ENCODE measurements at regions of chr17 and their contacts with region 1.

Region 1: GRCh38 chr17:6913608-6914443 is 82.0 kb upstream of the ALOX12 start:
- DNase-seq: peak; percentile 57 to 74
- ATAC-seq: peak; percentile 70 to 82
- H3K4me3 ChIP-seq: peak overlapping the region; percentile 36; the same call in 2 of the 3 replicates
- H3K27ac ChIP-seq: peak overlapping the region; percentile 9 to 50; a peak in 3 of 6 replicates
- H3K4me1 ChIP-seq: peaks cover 5% of the 10 kb centered on the region; the same call in 2 of the 3 replicates
- CTCF ChIP-seq: peak; percentile 84
- EP300 ChIP-seq: no peak
- POLR2A ChIP-seq: no peak
- RAD21 ChIP-seq: peak; percentile 88 to 89

Region 2: GRCh38 chr17:6862822-6863221 is 51.0 kb before region 1 on chr17:
- CTCF ChIA-PET with region 1: interaction called, 12 read pairs
- POLR2A ChIA-PET with region 1: no interaction called
- DNase-seq: no peak
- ATAC-seq: no peak; a peak in 2 of 6 replicates
- H3K4me3 ChIP-seq: no peak overlapping the region
- H3K27ac ChIP-seq: peak overlapping the region in 1 of 2 experiments; percentile 4; a peak in 1 of 6 replicates
- H3K4me1 ChIP-seq: peaks cover 23% of the 10 kb centered on the region
- CTCF ChIP-seq: no peak
- EP300 ChIP-seq: no peak
- POLR2A ChIP-seq: no peak
- RAD21 ChIP-seq: no peak

Region 3: DNA sequence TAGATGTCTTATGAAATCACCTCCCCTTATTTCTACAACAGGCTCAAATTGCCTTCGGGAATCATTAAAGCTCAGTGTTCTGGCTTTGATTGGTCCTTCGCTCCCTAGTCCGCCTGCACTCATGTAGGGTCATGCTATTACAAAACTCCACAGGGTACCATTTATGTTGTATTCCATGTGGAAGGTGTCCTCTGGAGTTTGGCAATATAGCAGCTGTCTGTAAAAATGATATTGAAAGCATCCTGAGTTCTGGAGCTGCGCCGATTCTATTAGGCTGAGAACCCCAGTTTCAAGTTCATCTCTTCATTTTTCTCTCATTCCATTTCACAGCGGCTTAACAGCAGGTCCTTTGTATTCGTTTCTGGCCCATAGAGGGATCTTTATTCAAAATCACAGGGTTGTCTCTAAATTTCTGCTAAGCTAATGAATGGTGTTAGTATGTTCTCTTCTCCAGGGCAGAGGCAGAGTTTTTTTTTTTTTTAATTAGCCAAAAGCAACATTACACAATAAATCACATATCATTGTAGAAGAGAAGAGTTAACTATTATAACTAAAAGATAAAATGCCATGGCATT is 10.4 kb before region 1 on chr17:
- CTCF ChIA-PET with region 1: interaction called, 21 read pairs
- POLR2A ChIA-PET with region 1: no interaction called
- DNase-seq: no peak
- ATAC-seq: no peak
- H3K4me3 ChIP-seq: no peak overlapping the region
- H3K27ac ChIP-seq: no peak overlapping the region
- H3K4me1 ChIP-seq: peaks cover 12% of the 10 kb centered on the region
- CTCF ChIP-seq: no peak
- EP300 ChIP-seq: no peak
- POLR2A ChIP-seq: no peak
- RAD21 ChIP-seq: no peak

Region 4: DNA sequence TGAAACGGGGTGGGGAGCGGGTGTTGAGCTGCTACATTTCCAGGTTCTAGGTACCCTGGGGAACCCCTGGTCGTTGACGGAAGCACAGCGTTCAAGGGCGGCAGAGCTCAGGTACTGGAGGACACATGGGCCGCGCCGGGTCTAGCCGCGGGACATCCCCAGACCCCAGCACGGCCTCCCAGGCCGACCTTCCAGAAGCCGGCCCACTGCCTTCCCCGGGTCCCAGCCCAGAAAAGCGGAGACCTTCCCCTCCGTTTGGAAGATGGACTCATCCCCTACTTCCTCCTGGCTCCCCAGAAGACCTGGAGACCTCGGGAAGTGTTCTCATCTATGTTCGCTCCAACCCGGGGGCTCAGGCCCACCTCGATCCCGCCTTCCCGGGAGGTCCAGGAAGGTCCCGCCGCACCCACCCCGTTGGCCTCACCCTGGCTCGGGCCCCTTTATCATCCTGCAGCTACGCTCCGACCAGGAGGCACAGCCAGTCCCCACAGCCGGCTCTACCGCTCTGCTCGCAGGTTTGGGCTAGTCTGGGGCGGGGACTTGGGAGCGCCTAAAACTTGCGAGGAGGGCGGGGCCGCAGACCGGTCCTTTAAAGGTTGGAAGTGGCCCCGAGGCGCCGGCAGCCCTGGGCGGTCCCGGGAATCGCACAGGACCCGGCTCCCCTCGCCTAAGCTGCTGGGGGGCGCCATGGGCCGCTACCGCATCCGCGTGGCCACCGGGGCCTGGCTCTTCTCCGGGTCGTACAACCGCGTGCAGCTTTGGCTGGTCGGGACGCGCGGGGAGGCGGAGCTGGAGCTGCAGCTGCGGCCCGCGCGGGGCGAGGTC is 81.8 kb after region 1 on chr17 and contains the start of gene ALOX12:
- CTCF ChIA-PET with region 1: interaction called, 26 read pairs
- POLR2A ChIA-PET with region 1: interaction called, 3 read pairs
- DNase-seq: no peak
- ATAC-seq: no peak
- H3K4me3 ChIP-seq: no peak within 1 kb of the TSS
- H3K27ac ChIP-seq: no peak within 1 kb of the TSS
- H3K4me1 ChIP-seq: no peaks in the 10 kb centered on the region
- CTCF ChIP-seq: no peak
- EP300 ChIP-seq: no peak
- POLR2A ChIP-seq: no peak
- RAD21 ChIP-seq: no peak
- polyA plus RNA-seq, gene ALOX12: not detected in 2 replicates

Region 5: DNA sequence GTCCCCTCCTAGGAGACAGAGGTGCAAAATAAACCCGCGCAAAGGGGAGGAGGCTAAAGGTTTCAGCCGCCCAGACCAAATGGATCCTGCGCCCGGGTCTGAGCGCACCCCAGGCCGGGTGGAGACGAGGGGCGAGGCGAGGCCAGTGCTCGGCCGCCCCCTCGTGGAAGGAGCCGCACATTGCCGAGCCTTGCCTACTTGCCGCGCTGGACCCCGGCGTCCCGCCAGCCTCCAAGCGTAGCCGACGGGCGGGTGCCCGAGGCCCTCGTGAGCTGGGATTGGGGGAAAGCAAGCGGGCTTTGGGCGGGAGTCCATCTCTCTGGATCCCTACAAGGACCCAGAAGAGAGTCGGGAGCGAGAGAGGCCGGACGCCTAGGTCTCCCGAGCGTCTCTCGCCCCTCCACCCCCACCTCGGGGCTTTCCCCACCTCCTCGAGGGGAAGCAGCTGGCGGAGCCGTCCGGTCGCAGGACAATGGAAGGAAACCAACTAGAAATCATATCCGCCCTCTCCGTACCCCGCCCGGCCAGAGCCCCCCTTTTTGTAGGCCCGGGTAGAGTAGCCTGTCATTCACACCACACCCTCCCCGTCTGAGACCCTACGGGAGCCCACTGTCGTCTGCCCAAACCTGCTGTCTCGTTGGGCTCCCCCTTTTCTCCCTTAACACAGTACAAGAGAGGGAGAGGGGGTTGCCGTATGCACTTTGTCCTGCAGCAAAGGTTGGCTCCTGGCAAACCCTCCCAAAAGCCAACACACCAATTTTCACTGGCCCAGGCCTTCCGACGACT is 108.4 kb after region 1 on chr17:
- CTCF ChIA-PET with region 1: interaction called, 21 read pairs
- POLR2A ChIA-PET with region 1: no interaction called
- DNase-seq: peak; percentile 78 to 95
- ATAC-seq: peak; percentile 60 to 83
- H3K4me3 ChIP-seq: no peak overlapping the region
- H3K27ac ChIP-seq: peak overlapping the region; percentile 42 to 71; a peak in 5 of 6 replicates
- H3K4me1 ChIP-seq: peaks cover 24% of the 10 kb centered on the region
- CTCF ChIP-seq: peak; percentile 91
- EP300 ChIP-seq: no peak
- POLR2A ChIP-seq: no peak
- RAD21 ChIP-seq: peak; percentile 82 to 88